Heart right ventricle (tissue), 16 donors: ENCODE measurements at regions of chr14 and their contacts with region 1.

Region 1: GRCh38 chr14:32710731-32711680 is 227.7 kb upstream of the NPAS3 start:
- DNase-seq: peak in 1 of 2 donors; percentile 32
- ATAC-seq: peak in 6 of 8 donors; percentile 7 to 47 (median 33)
- H3K4me3 ChIP-seq: peak overlapping the region in 2 of 10 donors; percentile 13 to 14
- H3K27ac ChIP-seq: peak overlapping the region in 4 of 10 donors; percentile 2 to 70 (median 34)
- H3K4me1 ChIP-seq: peaks cover 7 to 48% (median 32%) of the 10 kb centered on the region in 9 donors
- H3K27me3 ChIP-seq: no peaks in the 10 kb centered on the region
- CTCF ChIP-seq: peak; percentile 24 to 72 (median 53)

Region 2: GRCh38 chr14:32826404-32827082 is 115.5 kb after region 1 on chr14:
- intact Hi-C with region 1: loop called in 4 of 10 experiments (anchors 5 to 10 kb)
- DNase-seq: peak in 1 of 2 donors; percentile 29
- ATAC-seq: peak; percentile 31 to 79 (median 73)
- H3K4me3 ChIP-seq: no peak overlapping the region
- H3K27ac ChIP-seq: peak overlapping the region in 6 of 10 donors; percentile 18 to 68 (median 28)
- H3K4me1 ChIP-seq: peaks cover 0 to 67% (median 29%) of the 10 kb centered on the region in 9 donors
- H3K27me3 ChIP-seq: no peaks in the 10 kb centered on the region
- CTCF ChIP-seq: peak in 5 of 9 donors; percentile 18 to 45 (median 43)

Region 3: GRCh38 chr14:32908196-32909084 is 197.4 kb after region 1 on chr14:
- intact Hi-C with region 1: loop called in 1 of 10 experiments (anchors 10 kb)
- DNase-seq: no peak
- ATAC-seq: no peak
- H3K4me3 ChIP-seq: no peak overlapping the region
- H3K27ac ChIP-seq: no peak overlapping the region
- H3K4me1 ChIP-seq: no peaks in the 10 kb centered on the region
- H3K27me3 ChIP-seq: peaks cover 0 to 6% (median 0%) of the 10 kb centered on the region in 7 donors
- CTCF ChIP-seq: no peak

Region 4: GRCh38 chr14:32939254-32940065 is 228.5 kb after region 1 on chr14:
- intact Hi-C with region 1: loop called in 2 of 10 experiments (anchors 5 to 10 kb)
- DNase-seq: peak; percentile 82
- ATAC-seq: peak; percentile 92 to 95 (median 94)
- H3K4me3 ChIP-seq: peak overlapping the region; percentile 18 to 72 (median 58)
- H3K27ac ChIP-seq: peak overlapping the region; percentile 50 to 86 (median 80)
- H3K4me1 ChIP-seq: peaks cover 0 to 28% (median 12%) of the 10 kb centered on the region in 9 donors
- H3K27me3 ChIP-seq: peaks cover 0 to 66% (median 33%) of the 10 kb centered on the region in 7 donors
- CTCF ChIP-seq: no peak

Region 5: DNA sequence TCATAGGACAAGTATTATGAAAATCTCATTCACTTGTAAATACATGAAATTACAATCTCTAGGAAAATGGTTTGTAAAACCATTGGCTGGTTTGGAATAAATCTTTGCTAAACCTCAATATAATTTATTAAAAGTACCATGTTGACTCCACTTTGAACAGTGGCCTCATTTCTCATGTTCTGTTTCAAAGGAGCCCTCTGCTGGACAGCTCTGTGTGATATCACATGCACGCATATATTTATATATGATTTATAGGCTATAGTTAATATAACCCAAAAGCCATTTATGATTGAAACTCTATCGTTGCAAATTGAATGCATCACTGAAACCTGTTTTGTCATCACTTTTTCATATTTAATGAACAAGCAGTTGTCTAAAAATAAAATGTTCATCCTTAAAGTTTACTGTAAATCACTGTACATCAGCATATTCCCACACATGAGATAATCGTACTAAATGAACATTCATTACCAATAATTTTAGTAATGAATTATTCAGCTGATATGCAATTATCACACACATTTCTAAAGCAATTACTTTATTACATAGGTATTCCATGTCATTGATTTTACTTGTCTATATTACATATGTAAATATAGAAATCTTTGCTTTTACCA is 721.5 kb after region 1 on chr14:
- intact Hi-C with region 1: loop called in 1 of 10 experiments (anchors 10 kb)
- DNase-seq: no peak
- ATAC-seq: no peak
- H3K4me3 ChIP-seq: no peak overlapping the region
- H3K27ac ChIP-seq: no peak overlapping the region
- H3K4me1 ChIP-seq: peaks cover 0 to 7% (median 0%) of the 10 kb centered on the region in 9 donors
- H3K27me3 ChIP-seq: no peaks in the 10 kb centered on the region
- CTCF ChIP-seq: peak in 8 of 9 donors; percentile 22 to 55 (median 52)

Region 6: DNA sequence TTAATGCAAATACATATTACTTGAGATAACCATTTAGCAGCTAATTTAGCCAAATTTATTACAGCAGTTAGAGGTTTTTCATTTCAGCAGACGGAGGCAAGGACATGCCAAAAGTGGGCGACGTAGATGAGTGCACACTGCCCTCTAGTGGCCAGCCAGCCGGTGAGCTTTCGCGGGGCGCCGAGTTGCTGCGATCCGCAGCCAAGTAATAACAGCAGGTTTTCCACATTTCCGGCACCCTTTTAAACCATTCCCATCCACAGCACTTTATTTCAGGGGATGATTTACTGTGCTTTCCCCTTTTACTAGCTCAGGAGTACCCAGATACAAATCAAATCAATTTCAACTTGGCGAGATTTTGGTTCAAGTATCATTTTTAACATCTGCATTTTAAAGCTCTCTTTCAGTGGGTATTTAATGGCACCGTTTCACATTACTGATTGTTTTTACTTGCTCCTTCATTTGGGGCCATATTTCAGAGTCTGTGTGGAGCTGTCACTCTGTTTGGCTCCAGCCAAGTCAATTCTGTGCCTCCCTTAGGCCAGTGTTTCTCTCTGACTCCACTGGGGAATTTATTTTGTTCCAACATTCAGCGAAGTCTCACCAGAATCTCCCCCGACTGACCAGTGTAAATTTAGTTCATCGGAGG is 1081.8 kb after region 1 on chr14:
- intact Hi-C with region 1: loop called in 4 of 10 experiments (anchors 5 to 10 kb)
- DNase-seq: peak; percentile 83
- ATAC-seq: peak; percentile 85 to 95 (median 88)
- H3K4me3 ChIP-seq: peak overlapping the region in 7 of 10 donors; percentile 1 to 44 (median 34)
- H3K27ac ChIP-seq: peak overlapping the region in 1 of 10 donors; percentile 41
- H3K4me1 ChIP-seq: peaks cover 0 to 27% (median 7%) of the 10 kb centered on the region in 9 donors
- H3K27me3 ChIP-seq: peaks cover 0 to 8% (median 0%) of the 10 kb centered on the region in 7 donors
- CTCF ChIP-seq: peak; percentile 84 to 98 (median 95)